ENCODE measurements at regions of chr17 and their contacts with region 1.

Region 1: GRCh38 chr17:82716203-82717010 is at the start of gene FN3KRP:
- DNase-seq: peak; percentile 78 to 96
- H3K4me3 ChIP-seq: peak within 1 kb of the TSS; percentile 80 to 94
- H3K27ac ChIP-seq: peak within 1 kb of the TSS; percentile 46 to 55
- H3K4me1 ChIP-seq: peaks cover 4 to 9% of the 10 kb centered on the region in 2 donors
- H3K27me3 ChIP-seq: no peaks in the 10 kb centered on the region
- CTCF ChIP-seq: no peak
- total RNA-seq, gene FN3KRP: 21.0 TPM

Region 2: GRCh38 chr17:82475458-82475857 is 240.9 kb before region 1 on chr17:
- intact Hi-C with region 1: no loop called
- DNase-seq: no peak
- H3K4me3 ChIP-seq: no peak overlapping the region
- H3K27ac ChIP-seq: no peak overlapping the region
- H3K4me1 ChIP-seq: no peaks in the 10 kb centered on the region
- H3K27me3 ChIP-seq: no peaks in the 10 kb centered on the region
- CTCF ChIP-seq: no peak

Region 3: DNA sequence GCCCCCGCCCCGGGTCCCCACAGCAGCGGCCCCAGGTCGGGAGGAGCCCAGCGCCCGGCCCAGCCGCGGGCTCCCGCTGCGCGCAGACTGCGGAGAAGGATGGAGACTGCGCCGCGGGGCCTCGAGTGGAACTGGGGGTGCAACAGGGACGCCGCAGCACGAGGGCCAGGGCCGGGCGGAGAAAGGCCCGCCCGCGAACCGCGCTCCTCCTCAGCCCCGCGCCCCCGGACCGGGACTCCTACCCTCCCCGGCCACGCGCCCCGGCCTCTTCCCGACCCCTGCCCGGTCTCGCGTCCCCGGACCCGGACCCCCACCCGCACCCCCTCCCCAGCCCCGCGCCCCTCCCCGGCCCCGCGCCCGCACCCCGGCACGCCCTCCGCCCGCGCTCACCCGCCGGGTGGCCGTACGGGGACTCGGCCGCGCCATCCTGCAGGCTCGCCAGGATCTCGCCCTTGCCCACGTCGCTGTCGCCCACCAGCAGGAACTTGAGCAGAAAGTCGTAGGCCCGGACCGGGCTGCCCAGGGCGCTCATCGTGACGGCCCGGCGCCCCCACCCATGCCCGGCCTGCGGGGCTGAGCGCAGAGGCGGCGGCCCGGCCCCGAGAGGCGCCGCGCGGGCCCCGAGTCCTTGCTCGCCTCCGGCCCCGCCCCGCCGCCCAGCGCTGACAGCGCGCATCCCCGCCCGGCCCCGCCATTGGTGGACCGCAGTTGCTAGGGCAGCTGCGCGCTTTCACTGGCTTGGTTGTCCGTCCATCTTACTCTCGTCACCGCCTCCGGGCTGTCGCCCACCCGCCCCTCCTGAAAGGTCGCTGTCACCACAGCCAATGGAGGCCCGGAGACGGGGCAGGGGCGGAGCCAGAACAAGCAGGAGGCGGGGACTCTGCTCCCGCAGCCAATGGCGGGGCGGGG is 18.1 kb before region 1 on chr17 and contains the start of gene RAB40B:
- intact Hi-C with region 1: loop called (anchors 1 kb)
- DNase-seq: peak; percentile 98 to 100
- H3K4me3 ChIP-seq: peak within 1 kb of the TSS; percentile 71 to 99
- H3K27ac ChIP-seq: peak within 1 kb of the TSS in 1 of 2 donors; percentile 65
- H3K4me1 ChIP-seq: peaks cover 10 to 11% of the 10 kb centered on the region in 2 donors
- H3K27me3 ChIP-seq: no peaks in the 10 kb centered on the region
- CTCF ChIP-seq: no peak
- total RNA-seq, gene RAB40B: 9.4 TPM

Region 4: GRCh38 chr17:82737967-82738877 is 21.8 kb after region 1 on chr17:
- intact Hi-C with region 1: no loop called
- DNase-seq: no peak
- H3K4me3 ChIP-seq: no peak overlapping the region
- H3K27ac ChIP-seq: no peak overlapping the region
- H3K4me1 ChIP-seq: peaks cover 0 to 9% of the 10 kb centered on the region in 2 donors
- H3K27me3 ChIP-seq: no peaks in the 10 kb centered on the region
- CTCF ChIP-seq: no peak